Activated CD4-positive, alpha-beta T cell treated with anti-CD3 and anti-CD28 coated beads, Interleukin-2, amount 10 ng/mL, durations not matched to agents 24 days and 14 days (primary cell): ENCODE measurements at regions of chr6 and their contacts with region 1.

Region 1: GRCh38 chr6:161111261-161111660 is 119.7 kb downstream of the MAP3K4 start:
- DNase-seq: peak; percentile 77
- H3K4me3 Mint-ChIP-seq: peak overlapping the region; percentile 64
- H3K27ac Mint-ChIP-seq: peak overlapping the region; percentile 72
- H3K4me1 Mint-ChIP-seq: peaks cover 18% of the 10 kb centered on the region
- H3K27me3 Mint-ChIP-seq: no peaks in the 10 kb centered on the region

Region 2: GRCh38 chr6:160967833-160968232 is 143.4 kb before region 1 on chr6:
- intact Hi-C with region 1: no loop called
- DNase-seq: no peak
- H3K4me3 Mint-ChIP-seq: no peak overlapping the region
- H3K27ac Mint-ChIP-seq: no peak overlapping the region
- H3K4me1 Mint-ChIP-seq: no peaks in the 10 kb centered on the region
- H3K27me3 Mint-ChIP-seq: peaks cover 3% of the 10 kb centered on the region

Region 3: GRCh38 chr6:161023316-161023715 is 87.9 kb before region 1 on chr6:
- intact Hi-C with region 1: no loop called
- DNase-seq: no peak
- H3K4me3 Mint-ChIP-seq: no peak overlapping the region
- H3K27ac Mint-ChIP-seq: no peak overlapping the region
- H3K4me1 Mint-ChIP-seq: no peaks in the 10 kb centered on the region
- H3K27me3 Mint-ChIP-seq: no peaks in the 10 kb centered on the region

Region 4: DNA sequence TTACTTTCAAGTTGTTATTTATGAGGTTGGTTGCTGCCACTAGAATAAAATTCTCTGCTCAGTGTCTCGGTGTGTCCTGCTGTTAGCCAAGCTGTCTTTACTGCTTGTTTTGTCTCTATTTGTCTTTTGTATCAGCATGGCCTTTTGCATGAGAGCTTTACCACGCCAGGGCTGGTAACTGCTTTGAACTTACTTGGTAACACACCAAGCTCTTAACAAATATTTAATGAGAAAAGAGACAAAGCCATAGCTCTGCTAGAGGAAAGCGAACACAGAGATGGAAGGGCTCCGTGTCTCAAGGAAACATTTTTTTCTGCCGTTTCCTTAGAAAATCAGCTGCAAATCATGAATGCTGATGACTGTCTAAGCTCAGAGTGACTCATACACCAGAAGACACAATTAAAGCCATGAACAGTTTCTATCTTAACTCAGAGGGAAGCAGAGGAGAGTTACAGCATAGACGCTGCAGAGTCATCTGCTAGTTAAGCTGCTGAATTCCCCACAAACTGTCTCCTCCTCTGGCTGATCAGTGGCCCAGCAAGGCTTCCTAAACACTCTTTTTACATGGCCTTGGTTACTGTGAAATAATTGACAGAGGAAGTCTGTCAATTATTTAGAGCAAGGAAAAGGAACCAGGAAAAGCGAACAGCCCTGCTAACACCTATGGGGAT is 117.8 kb after region 1 on chr6:
- intact Hi-C with region 1: loop called (anchors 5 kb)
- DNase-seq: peak; percentile 68
- H3K4me3 Mint-ChIP-seq: peak overlapping the region; percentile 67
- H3K27ac Mint-ChIP-seq: peak overlapping the region; percentile 71
- H3K4me1 Mint-ChIP-seq: peaks cover 48% of the 10 kb centered on the region
- H3K27me3 Mint-ChIP-seq: no peaks in the 10 kb centered on the region